Mammary epithelial cell (primary cell): ENCODE measurements at regions of chr12 and their contacts with region 1.

Region 1: GRCh38 chr12:68610370-68611093 is at the start of gene RAP1B:
- DNase-seq: peak; percentile 85
- H3K4me3 ChIP-seq: peak within 1 kb of the TSS; percentile 67 to 100 (median 99)
- H3K27ac ChIP-seq: peak within 1 kb of the TSS; percentile 96
- H3K4me1 ChIP-seq: peaks cover 33% of the 10 kb centered on the region
- H3K27me3 ChIP-seq: no peaks in the 10 kb centered on the region
- CTCF ChIP-seq: no peak
- total RNA-seq, gene RAP1B: 140 to 188 TPM

Region 2: GRCh38 chr12:68406134-68406594 is 204.4 kb before region 1 on chr12:
- CTCF ChIA-PET with region 1: no interaction called
- dilution Hi-C with region 1: no loop called
- in situ Hi-C with region 1: no loop called
- intact Hi-C with region 1: loop called (anchors 1 kb)
- DNase-seq: peak; percentile 50
- H3K4me3 ChIP-seq: no peak overlapping the region
- H3K27ac ChIP-seq: no peak overlapping the region
- H3K4me1 ChIP-seq: peaks cover 8% of the 10 kb centered on the region
- H3K27me3 ChIP-seq: no peaks in the 10 kb centered on the region
- CTCF ChIP-seq: peak; percentile 48 to 52

Region 3: DNA sequence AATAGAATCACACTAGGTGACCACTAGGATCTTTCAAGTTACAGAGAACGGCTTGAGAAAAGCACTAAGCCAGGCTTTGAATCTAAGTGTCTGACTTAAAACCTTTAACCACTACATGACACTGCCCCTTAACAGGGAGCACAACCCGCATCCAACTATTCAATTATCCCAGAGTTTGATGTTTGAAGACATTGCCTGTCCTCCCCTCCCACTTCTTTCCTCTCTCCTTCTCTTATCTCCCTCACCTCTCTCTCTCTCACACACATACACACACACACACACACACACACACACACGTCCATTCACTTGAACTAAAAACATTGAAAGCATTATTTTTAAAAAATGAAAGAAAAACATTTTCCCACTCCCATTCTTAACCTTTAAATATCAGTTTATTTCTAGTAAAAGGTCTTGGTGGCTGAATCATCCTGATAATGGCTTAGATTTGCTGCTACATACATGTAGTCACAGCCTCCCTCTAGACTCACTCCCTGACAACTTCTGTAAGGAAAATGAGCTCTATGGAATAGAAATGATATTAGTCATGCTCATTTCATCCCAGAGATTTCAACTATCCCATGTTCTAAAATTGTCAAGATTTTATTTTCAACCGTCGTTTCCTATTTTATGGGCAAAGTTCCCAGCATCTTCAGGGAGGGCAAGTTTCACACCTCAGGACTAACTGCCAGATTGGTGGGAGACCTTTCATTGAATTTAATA is 53.4 kb before region 1 on chr12:
- CTCF ChIA-PET with region 1: no interaction called
- dilution Hi-C with region 1: no loop called
- in situ Hi-C with region 1: no loop called
- intact Hi-C with region 1: loop called (anchors 2 kb)
- DNase-seq: peak; percentile 52
- H3K4me3 ChIP-seq: no peak overlapping the region
- H3K27ac ChIP-seq: no peak overlapping the region
- H3K4me1 ChIP-seq: peaks cover 25% of the 10 kb centered on the region
- H3K27me3 ChIP-seq: no peaks in the 10 kb centered on the region
- CTCF ChIP-seq: no peak

Region 4: GRCh38 chr12:68641138-68641537 is 30.6 kb after region 1 on chr12:
- CTCF ChIA-PET with region 1: no interaction called
- dilution Hi-C with region 1: no loop called
- in situ Hi-C with region 1: no loop called
- intact Hi-C with region 1: no loop called
- DNase-seq: peak; percentile 28
- H3K4me3 ChIP-seq: no peak overlapping the region
- H3K27ac ChIP-seq: no peak overlapping the region
- H3K4me1 ChIP-seq: peaks cover 6% of the 10 kb centered on the region
- H3K27me3 ChIP-seq: no peaks in the 10 kb centered on the region
- CTCF ChIP-seq: no peak

Region 5: GRCh38 chr12:68686595-68687521 is 76.3 kb after region 1 on chr12 and contains the start of gene NUP107:
- CTCF ChIA-PET with region 1: no interaction called
- dilution Hi-C with region 1: no loop called
- in situ Hi-C with region 1: no loop called
- intact Hi-C with region 1: loop called (anchors 2 kb)
- DNase-seq: peak; percentile 98
- H3K4me3 ChIP-seq: peak within 1 kb of the TSS; percentile 73 to 90 (median 89)
- H3K27ac ChIP-seq: peak within 1 kb of the TSS; percentile 91
- H3K4me1 ChIP-seq: peaks cover 17% of the 10 kb centered on the region
- H3K27me3 ChIP-seq: no peaks in the 10 kb centered on the region
- CTCF ChIP-seq: peak in 1 of 2 donors; percentile 39
- total RNA-seq, gene NUP107: 40.8 to 52.3 TPM